AG04450 (cell line): ENCODE measurements at regions of chr3 and their contacts with region 1.

Region 1: DNA sequence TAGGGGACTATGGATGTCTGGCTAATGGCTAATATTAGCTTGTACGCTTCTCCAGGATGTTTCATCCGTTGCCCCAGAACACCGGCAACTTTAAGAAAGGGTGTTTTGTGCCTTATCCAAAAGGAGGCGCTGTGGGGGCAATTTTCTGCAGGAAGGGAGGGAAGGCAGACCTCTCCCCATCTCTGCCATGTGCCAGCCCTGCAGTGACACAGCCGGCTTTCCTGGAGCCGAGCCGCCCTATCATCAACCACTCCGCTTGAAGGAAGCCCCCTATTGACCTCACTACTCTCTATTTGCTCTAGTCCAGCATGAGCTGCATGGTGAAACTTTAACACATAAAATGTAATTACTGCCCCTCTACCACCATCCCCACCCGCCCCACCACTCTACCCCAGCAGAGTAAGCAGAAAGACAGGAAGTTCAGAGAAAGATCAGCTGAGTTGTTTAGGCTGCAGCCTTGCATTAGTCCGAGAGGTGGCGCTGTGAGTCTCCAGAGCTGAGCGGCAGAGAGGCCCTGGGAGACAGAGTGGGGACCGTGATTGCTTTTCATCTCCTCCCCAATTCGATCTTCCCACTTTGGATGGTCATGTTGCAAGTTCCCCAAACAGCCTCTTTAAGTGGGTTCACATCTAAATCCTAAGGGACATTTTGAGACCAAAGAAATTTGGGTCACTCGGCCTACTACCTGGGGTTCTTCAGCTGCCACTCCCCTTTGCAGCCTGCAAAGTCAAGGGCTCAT is 24.5 kb upstream of the RAD18 start:
- DNase-seq: no peak
- H3K4me3 ChIP-seq: no peak overlapping the region
- H3K27ac ChIP-seq: no peak overlapping the region
- H3K27me3 ChIP-seq: peaks cover 14% of the 10 kb centered on the region
- CTCF ChIP-seq: peak; percentile 75

Region 2: GRCh38 chr3:8959668-8960067 is 28.1 kb before region 1 on chr3:
- CTCF ChIA-PET with region 1: no interaction called
- POLR2A ChIA-PET with region 1: no interaction called
- DNase-seq: no peak
- H3K4me3 ChIP-seq: no peak overlapping the region
- H3K27ac ChIP-seq: no peak overlapping the region
- H3K27me3 ChIP-seq: no peaks in the 10 kb centered on the region
- CTCF ChIP-seq: no peak

Region 3: DNA sequence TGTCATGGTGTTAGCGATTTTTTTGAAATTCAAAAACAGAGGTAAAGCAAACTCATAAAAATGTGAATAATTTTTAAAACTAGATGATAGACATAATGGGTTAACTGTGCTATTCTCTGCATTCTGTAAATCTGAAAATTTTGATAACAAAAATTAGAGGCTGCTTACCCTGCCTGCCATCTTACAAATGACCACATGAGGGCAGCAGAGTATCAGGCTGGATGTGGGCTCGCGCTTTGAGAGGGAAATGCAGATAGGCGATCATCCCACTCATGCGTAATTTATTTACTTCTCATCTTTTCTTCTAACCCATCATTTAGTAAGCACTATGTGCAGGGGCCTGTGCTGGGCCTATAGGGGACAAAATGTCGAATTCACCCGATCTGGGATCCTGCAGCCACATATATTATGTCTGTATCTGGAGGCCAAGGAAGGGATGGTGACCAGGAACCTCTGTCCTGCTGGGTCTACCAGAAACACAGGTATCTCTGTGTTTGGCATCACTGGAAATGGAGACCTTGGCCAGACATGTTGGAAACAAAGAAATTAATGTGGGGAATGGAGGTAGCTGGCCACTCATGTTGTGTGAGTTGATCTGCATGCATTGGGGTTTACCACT is 16.7 kb before region 1 on chr3:
- CTCF ChIA-PET with region 1: interaction called, 16 read pairs
- POLR2A ChIA-PET with region 1: interaction called, 3 read pairs
- DNase-seq: peak; percentile 37
- H3K4me3 ChIP-seq: no peak overlapping the region
- H3K27ac ChIP-seq: no peak overlapping the region
- H3K27me3 ChIP-seq: no peaks in the 10 kb centered on the region
- CTCF ChIP-seq: peak; percentile 99

Region 4: DNA sequence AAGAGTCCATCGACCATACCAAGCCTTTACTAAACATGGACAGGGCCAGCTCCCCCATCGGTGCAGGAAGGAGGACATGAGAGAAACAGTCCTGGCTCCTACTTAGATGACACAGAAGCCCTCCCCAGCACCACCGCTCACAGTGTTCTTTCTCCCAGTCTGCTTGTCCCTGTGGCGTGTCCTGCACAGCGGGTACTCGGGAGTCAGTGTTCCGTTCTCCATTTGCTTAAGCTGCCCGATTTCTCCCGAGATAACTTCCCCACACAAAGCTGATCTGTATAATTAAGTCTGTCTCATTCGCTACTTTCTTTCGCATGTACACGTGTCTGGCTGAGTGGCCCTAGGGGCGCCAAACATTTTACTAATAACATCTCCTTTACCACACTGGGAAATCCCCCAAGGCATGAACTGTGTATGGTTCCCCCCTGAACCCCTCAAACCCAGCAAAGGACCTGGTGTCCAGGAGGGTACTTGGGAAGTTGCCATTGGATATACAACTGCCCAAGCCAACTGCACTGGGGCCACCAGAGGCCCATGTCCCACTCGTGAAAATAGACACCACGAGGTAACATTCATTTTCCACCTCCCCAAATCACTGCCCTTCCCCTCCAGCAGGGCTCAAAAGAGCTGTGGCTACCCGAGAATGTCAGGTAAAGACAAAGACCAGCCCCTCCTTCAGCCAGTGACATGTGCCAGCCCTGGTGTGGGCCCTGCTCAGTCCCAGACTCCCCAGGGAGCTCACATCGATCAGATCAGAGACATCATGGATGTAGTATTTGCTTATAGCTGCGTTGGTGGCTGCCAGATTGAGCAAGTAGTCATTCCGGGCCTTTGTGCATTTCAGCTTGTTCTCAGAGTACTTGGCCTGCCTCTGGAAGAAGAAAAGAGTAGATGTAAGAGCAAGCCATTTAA is 71.9 kb after region 1 on chr3:
- CTCF ChIA-PET with region 1: interaction called, 10 read pairs
- POLR2A ChIA-PET with region 1: interaction called, 4 read pairs
- DNase-seq: no peak
- H3K4me3 ChIP-seq: no peak overlapping the region
- H3K27ac ChIP-seq: no peak overlapping the region
- H3K27me3 ChIP-seq: no peaks in the 10 kb centered on the region
- CTCF ChIP-seq: no peak